PC-9 (cell line): ENCODE measurements at regions of chr15 and their contacts with region 1.

Region 1: GRCh38 chr15:34987985-34988873 is at the start of gene ZNF770:
- DNase-seq: peak; percentile 53 to 74
- H3K4me3 ChIP-seq: peak within 1 kb of the TSS; percentile 93
- H3K27ac ChIP-seq: peak within 1 kb of the TSS; percentile 79
- H3K4me1 ChIP-seq: peaks cover 45% of the 10 kb centered on the region
- H3K27me3 ChIP-seq: no peaks in the 10 kb centered on the region
- CTCF ChIP-seq: no peak
- total RNA-seq, gene ZNF770: 25.9 and 34.0 TPM in 2 replicates

Region 2: GRCh38 chr15:34927726-34928125 is 60.5 kb before region 1 on chr15:
- CTCF ChIA-PET with region 1: no interaction called
- POLR2A ChIA-PET with region 1: no interaction called
- intact Hi-C with region 1: no loop called
- DNase-seq: peak in 1 of 2 experiments; percentile 44
- H3K4me3 ChIP-seq: no peak overlapping the region
- H3K27ac ChIP-seq: no peak overlapping the region
- H3K4me1 ChIP-seq: no peaks in the 10 kb centered on the region
- H3K27me3 ChIP-seq: no peaks in the 10 kb centered on the region
- CTCF ChIP-seq: no peak

Region 3: GRCh38 chr15:34969340-34970097 is 18.7 kb before region 1 on chr15 and contains the start of gene AQR:
- CTCF ChIA-PET with region 1: interaction called, 7 read pairs
- POLR2A ChIA-PET with region 1: interaction called, 12 read pairs
- intact Hi-C with region 1: loop called (anchors 1 kb)
- DNase-seq: peak; percentile 93
- H3K4me3 ChIP-seq: peak within 1 kb of the TSS; percentile 77
- H3K27ac ChIP-seq: 0 out of 2 replicates have a peak within 1 kb of the TSS, but pooled peaks have one; percentile 25
- H3K4me1 ChIP-seq: peaks cover 9% of the 10 kb centered on the region; the same call in 1 of the 2 replicates
- H3K27me3 ChIP-seq: no peaks in the 10 kb centered on the region
- CTCF ChIP-seq: peak; percentile 56
- total RNA-seq, gene AQR: 24.1 and 33.6 TPM in 2 replicates

Region 4: DNA sequence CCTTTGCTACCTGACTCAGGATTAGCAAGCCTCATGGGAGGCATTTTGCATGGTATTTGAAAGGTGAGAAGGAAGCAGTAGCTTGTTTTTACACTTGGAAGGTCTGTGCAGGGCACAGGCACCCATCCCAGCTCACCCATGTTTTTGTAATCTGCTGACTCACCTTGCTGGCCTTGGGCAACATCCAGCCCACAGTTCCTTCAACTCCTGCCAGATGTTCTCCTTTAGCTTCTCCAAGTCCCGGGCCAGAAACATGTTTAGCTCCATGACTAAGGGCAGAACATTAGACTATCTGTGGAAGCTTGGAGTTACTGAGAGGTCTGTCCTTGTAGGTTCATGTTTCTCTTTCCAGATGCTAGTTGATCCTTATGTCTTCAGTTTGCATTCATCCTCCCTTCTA is 12.3 kb after region 1 on chr15:
- CTCF ChIA-PET with region 1: no interaction called
- POLR2A ChIA-PET with region 1: interaction called, 24 read pairs
- intact Hi-C with region 1: loop called (anchors 1 kb)
- DNase-seq: peak; percentile 81 to 87
- H3K4me3 ChIP-seq: no peak overlapping the region
- H3K27ac ChIP-seq: peak overlapping the region; percentile 76
- H3K4me1 ChIP-seq: 0 out of 2 replicates have a peak, but pooled peaks cover 8% of the 10 kb centered on the region
- H3K27me3 ChIP-seq: no peaks in the 10 kb centered on the region
- CTCF ChIP-seq: no peak

Region 5: GRCh38 chr15:35019386-35020083 is 31.3 kb after region 1 on chr15:
- CTCF ChIA-PET with region 1: interaction called, 4 read pairs
- POLR2A ChIA-PET with region 1: interaction called, 11 read pairs
- intact Hi-C with region 1: no loop called
- DNase-seq: peak in 1 of 2 experiments; percentile 39
- H3K4me3 ChIP-seq: peak overlapping the region; percentile 29; the same call in 1 of the 2 replicates
- H3K27ac ChIP-seq: no peak overlapping the region
- H3K4me1 ChIP-seq: peaks cover 14% of the 10 kb centered on the region
- H3K27me3 ChIP-seq: no peaks in the 10 kb centered on the region
- CTCF ChIP-seq: no peak

Region 6: DNA sequence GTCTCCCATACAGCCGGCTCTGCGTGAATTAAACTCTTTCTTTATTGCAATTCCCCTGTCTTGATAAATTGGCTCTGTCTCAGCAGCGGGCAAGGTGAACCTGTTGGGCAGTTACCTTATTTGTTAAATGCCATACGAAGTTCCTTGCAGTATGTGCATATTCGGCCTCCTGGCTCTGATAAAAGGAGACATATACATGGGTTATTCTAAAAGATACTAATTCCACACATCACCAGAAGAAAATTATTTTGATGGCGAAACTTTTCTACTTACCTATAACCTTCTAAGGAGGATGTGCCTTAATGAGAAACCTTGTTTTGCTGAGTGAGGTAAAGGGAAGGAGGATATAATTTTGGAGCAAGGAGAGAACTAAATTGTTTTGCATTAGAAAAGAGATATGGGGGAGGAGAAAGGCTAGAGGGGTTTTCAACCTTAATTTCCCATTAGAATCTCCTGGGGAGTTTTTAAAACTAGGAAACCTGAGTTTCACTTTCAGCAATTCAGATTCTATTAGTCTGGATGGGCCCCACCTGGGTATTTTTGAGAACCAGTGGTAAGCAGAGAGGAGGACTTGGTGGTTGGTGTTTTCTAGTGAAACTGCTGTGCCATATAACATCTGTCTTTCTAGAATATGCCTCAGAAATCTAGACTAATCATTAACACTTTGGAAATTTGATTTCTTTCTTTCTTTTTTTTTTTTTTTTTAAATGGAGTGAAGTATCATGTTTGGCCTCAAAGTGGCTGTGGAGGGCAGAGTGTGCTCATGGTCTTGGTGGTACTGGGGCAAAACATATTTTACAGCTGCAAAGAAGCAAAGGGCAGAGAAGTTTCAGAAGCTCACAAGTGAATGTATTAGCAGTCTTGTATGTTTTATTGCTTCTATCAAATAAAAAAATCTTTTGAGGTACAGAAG is 73.9 kb after region 1 on chr15:
- CTCF ChIA-PET with region 1: interaction called, 5 read pairs
- POLR2A ChIA-PET with region 1: no interaction called
- intact Hi-C with region 1: loop called (anchors 5 kb)
- DNase-seq: no peak
- H3K4me3 ChIP-seq: no peak overlapping the region; the same call in 1 of the 2 replicates
- H3K27ac ChIP-seq: no peak overlapping the region
- H3K4me1 ChIP-seq: peaks cover 16% of the 10 kb centered on the region; the same call in 1 of the 2 replicates
- H3K27me3 ChIP-seq: no peaks in the 10 kb centered on the region
- CTCF ChIP-seq: no peak

Region 7: GRCh38 chr15:35078221-35078915 is 90.1 kb after region 1 on chr15:
- CTCF ChIA-PET with region 1: interaction called, 3 read pairs
- POLR2A ChIA-PET with region 1: no interaction called
- intact Hi-C with region 1: loop called (anchors 5 kb)
- DNase-seq: peak in 1 of 2 experiments; percentile 29
- H3K4me3 ChIP-seq: no peak overlapping the region
- H3K27ac ChIP-seq: no peak overlapping the region
- H3K4me1 ChIP-seq: no peaks in the 10 kb centered on the region
- H3K27me3 ChIP-seq: no peaks in the 10 kb centered on the region
- CTCF ChIP-seq: peak; percentile 86